ENCODE measurements at regions of chr4 and their contacts with region 1.

Region 1: DNA sequence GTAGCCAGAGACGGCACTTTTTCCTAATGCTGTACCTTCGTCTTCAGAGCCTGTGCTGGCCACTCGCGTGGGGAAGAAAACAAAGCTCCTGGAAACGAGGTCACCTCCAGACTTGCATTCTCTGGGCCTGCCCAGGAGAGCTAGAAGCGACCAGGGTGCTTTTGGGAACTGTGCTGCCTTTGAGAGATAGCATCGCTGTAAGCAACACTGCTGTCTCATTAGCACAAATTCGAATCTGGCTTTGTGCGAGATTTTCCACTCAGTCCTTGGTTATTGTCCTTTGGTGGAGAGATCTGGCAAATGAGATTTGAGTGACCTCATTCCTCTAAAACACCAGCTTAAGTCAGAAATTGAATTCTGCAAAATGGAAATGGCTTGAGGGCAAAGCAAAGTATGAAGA is 66.1 kb upstream of the TLR3 start:
- DNase-seq: no peak
- ATAC-seq: no peak
- H3K4me3 ChIP-seq: no peak overlapping the region
- H3K27ac ChIP-seq: no peak overlapping the region
- H3K4me1 ChIP-seq: peaks cover 0 to 4% (median 0%) of the 10 kb centered on the region in 9 donors
- H3K27me3 ChIP-seq: no peaks in the 10 kb centered on the region
- CTCF ChIP-seq: no peak

Region 2: DNA sequence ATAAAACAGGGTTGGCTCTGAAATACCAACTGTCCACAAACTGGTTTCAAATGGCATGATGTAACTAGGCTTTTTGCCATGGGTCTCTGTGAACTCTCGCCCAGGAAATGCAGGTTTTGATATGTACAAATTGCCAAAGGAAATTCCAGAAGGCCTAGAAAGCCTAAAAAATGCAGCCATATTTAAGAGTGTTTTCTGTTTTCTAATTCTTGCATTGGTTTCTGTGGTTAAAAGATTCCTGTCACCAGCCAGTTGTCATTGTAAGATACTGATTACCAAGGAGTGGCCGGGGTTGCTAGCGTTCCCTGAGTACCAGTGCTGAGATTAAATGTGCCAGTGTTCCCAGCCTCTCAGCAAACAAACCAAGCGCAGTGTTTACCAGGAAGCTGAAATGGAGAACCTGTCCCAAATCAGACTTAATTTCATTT is 136.9 kb before region 1 on chr4:
- intact Hi-C with region 1: no loop called
- DNase-seq: no peak
- ATAC-seq: peak in 6 of 8 donors; percentile 50 to 85 (median 74)
- H3K4me3 ChIP-seq: no peak overlapping the region
- H3K27ac ChIP-seq: peak overlapping the region; percentile 53 to 89 (median 83)
- H3K4me1 ChIP-seq: peaks cover 0 to 67% (median 17%) of the 10 kb centered on the region in 9 donors
- H3K27me3 ChIP-seq: no peaks in the 10 kb centered on the region
- CTCF ChIP-seq: no peak

Region 3: DNA sequence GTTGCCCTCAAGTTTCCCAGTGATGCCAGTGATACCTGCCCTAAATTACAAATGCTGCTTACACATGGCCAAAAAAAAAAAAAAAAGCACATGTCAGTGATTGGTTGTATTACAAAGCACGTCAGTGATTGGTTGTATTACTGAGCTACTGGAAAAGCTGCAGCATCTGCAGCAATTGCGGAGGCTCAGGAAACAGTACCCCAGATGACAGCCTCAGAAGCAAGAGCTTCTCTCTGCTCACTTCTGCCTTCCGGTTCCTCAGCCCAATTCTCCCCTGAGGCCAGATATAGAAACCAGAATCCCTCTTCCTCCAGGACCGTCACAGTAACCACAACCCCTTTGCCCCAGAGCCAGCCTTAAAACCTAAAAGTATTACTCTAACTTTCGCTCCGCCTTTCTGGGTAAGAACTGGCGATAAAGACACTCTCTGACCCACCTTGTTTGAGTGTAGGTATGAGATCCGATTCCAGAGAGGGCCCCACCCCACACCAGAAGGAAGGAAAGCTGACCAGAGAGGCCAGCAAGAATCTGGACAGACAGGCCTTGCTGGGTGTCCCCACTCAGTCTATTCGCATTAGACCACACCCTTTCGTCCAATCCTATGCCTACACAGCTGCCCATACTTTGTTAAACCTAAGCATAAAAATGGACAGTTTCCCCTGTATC is 105.9 kb before region 1 on chr4:
- intact Hi-C with region 1: loop called in 2 of 10 experiments (anchors 10 kb)
- DNase-seq: no peak
- ATAC-seq: no peak
- H3K4me3 ChIP-seq: no peak overlapping the region
- H3K27ac ChIP-seq: no peak overlapping the region
- H3K4me1 ChIP-seq: no peaks in the 10 kb centered on the region
- H3K27me3 ChIP-seq: no peaks in the 10 kb centered on the region
- CTCF ChIP-seq: no peak

Region 4: DNA sequence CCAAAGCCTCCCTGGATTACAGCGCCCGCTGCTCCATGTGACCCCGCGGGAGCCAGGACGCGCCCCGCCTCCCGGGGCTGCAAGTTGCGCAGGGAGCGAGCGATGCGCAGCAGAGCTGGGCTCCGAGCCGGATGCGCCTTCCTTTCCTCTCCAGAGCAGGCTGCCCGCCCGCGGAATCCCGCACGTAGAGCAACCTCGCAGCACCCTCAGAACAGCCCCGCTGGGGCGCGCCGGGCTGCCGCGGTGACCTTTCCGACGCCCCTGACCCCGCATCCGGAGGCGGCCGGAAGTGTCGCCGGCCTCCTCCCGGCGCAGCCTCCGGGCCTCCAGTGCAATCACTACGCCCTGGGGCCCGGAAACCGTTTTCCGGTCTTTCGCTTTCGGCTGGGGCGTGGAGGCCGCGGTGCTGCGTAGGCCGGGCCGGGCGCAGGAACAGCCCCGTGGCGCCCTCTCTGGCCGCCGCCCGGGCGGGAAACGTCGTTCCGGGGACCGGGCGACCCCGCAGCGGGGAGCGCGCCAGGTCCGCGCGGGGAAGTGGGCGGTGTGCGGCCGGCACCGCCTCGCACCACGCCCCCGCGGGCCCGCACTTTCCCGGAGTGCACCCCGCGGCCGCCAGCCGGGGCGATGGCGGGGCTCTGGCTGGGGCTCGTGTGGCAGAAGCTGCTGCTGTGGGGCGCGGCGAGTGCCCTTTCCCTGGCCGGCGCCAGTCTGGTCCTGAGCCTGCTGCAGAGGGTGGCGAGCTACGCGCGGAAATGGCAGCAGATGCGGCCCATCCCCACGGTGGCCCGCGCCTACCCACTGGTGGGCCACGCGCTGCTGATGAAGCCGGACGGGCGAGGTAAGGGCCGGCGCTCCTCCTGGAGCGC is 188.6 kb after region 1 on chr4 and contains the start of gene CYP4V2:
- intact Hi-C with region 1: no loop called
- DNase-seq: peak; percentile 84 to 85
- ATAC-seq: peak; percentile 80 to 92 (median 88)
- H3K4me3 ChIP-seq: peak within 1 kb of the TSS; percentile 77 to 96 (median 90)
- H3K27ac ChIP-seq: peak within 1 kb of the TSS; percentile 91 to 99 (median 98)
- H3K4me1 ChIP-seq: peaks cover 6 to 45% (median 36%) of the 10 kb centered on the region in 9 donors
- H3K27me3 ChIP-seq: no peaks in the 10 kb centered on the region
- CTCF ChIP-seq: peak in 7 of 9 donors; percentile 35 to 70 (median 48)
- total RNA-seq, gene CYP4V2: 16.1 to 37.9 (median 25.9) TPM